Naive thymus-derived CD4-positive, alpha-beta T cell (primary cell): ENCODE measurements at regions of chr11 and their contacts with region 1.

Region 1: DNA sequence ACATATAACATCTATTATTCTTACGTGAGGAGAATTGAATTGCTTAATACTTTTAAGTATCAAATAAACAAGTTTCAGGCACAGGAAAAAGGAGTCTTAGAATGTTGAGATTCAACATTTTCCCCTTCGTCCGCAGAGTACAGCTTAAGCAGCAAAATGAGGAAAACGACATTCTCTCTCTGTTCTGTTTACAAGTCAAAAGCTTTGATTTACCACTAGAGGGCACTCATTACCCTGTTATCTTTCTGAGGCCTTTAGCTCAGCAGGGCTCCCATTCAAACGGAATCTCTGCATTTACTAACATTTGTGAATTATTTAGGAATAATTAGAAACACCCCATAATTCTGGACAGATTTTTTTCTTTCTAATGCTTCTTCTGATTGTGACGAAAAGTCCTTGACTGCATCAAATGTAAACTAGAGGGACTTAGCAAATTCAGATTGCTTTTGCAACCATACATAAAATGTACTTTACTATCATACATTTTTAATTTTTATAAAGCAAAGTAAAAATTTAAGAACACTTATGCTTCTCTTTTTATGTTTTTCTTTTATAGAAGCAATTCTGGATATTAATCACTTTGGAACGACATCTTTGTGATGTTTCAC is 75.0 kb downstream of the JRKL start:
- DNase-seq: peak in 7 of 9 donors; percentile 12 to 64 (median 54)
- ATAC-seq: peak; percentile 79
- H3K4me3 ChIP-seq: no peak overlapping the region
- H3K4me3 Mint-ChIP-seq: peak overlapping the region in 6 of 10 donors; percentile 64 to 76 (median 73)
- H3K27ac ChIP-seq: no peak overlapping the region
- H3K27ac Mint-ChIP-seq: peak overlapping the region in 1 of 9 donors; percentile 25
- H3K4me1 ChIP-seq: peaks cover 0 to 3% of the 10 kb centered on the region in 2 donors
- H3K4me1 Mint-ChIP-seq: peaks cover 0 to 8% (median 6%) of the 10 kb centered on the region in 7 donors
- H3K27me3 ChIP-seq: peaks cover 0 to 3% of the 10 kb centered on the region in 2 donors
- H3K27me3 Mint-ChIP-seq: peaks cover under 1 to 16% (median 13%) of the 10 kb centered on the region in 5 donors

Region 2: GRCh38 chr11:95835768-95836488 is 628.9 kb before region 1 on chr11:
- CTCF ChIA-PET with region 1: interaction called, 4 read pairs
- POLR2A ChIA-PET with region 1: no interaction called
- intact Hi-C with region 1: loop called in 1 of 2 experiments (anchors 1 kb)
- DNase-seq: peak; percentile 17 to 67 (median 49)
- ATAC-seq: peak; percentile 96
- H3K4me3 ChIP-seq: no peak overlapping the region
- H3K4me3 Mint-ChIP-seq: no peak overlapping the region
- H3K27ac ChIP-seq: no peak overlapping the region
- H3K27ac Mint-ChIP-seq: peak overlapping the region in 4 of 9 donors; percentile 17 to 65 (median 28)
- H3K4me1 ChIP-seq: no peaks in the 10 kb centered on the region
- H3K4me1 Mint-ChIP-seq: peaks cover 0 to 5% (median 0%) of the 10 kb centered on the region in 7 donors
- H3K27me3 ChIP-seq: no peaks in the 10 kb centered on the region
- H3K27me3 Mint-ChIP-seq: no peaks in the 10 kb centered on the region

Region 3: DNA sequence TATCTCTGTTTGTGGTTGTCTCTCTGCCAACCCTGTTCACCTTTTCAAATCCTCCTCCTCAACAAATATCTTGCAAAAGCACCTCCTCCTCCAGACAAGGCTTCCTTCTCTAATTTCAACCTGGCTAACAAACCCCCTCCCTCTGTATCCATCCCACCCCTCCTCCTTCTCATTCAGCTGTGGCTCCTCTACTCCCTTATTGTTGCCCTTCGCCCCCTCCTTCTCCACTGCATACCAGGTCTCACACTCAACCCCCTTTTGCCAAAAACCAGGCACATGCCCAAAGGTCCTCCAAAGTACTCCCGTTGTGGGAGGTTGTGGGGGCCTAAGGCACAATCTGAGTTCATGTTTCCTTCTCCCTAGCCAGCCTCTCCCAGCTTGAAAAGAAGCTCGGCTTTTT is 35.6 kb after region 1 on chr11:
- CTCF ChIA-PET with region 1: no interaction called
- POLR2A ChIA-PET with region 1: no interaction called
- intact Hi-C with region 1: no loop called
- DNase-seq: no peak
- ATAC-seq: no peak
- H3K4me3 ChIP-seq: no peak overlapping the region
- H3K4me3 Mint-ChIP-seq: no peak overlapping the region
- H3K27ac ChIP-seq: no peak overlapping the region
- H3K27ac Mint-ChIP-seq: no peak overlapping the region
- H3K4me1 ChIP-seq: no peaks in the 10 kb centered on the region
- H3K4me1 Mint-ChIP-seq: no peaks in the 10 kb centered on the region
- H3K27me3 ChIP-seq: no peaks in the 10 kb centered on the region
- H3K27me3 Mint-ChIP-seq: peaks cover 0 to 11% (median 6%) of the 10 kb centered on the region in 5 donors

Region 4: DNA sequence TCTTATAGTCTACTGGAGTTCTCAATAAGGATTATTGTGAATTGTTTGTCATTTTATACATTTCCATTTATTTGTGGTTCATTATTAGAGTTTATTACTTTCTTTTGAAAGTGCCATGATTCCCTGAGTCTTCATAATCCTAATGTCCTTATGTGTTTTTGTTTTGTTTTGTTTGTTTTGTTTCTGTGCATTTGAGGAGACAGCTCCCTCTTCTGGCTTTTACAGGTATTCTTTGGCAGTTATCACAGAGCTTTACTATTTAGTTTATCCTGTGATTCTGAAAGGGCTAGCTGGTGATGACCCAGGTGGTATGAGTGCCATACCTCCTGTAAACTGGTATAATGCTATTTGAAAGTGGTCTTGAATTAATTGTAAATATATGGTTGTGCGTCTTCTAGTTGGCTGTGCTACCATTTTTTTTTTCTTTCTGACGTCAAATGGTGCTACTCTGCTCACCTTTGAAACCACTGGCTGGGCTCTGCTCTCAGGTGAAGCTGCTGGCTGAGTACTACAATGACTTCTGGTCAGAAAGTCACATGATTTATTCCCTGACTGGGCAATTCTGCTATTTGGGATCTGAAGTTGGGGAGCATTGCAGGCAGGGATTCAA is 676.2 kb after region 1 on chr11:
- CTCF ChIA-PET with region 1: no interaction called
- POLR2A ChIA-PET with region 1: no interaction called
- intact Hi-C with region 1: loop called in 1 of 2 experiments (anchors 2 kb)
- DNase-seq: no peak
- ATAC-seq: no peak
- H3K4me3 ChIP-seq: no peak overlapping the region
- H3K4me3 Mint-ChIP-seq: no peak overlapping the region
- H3K27ac ChIP-seq: no peak overlapping the region
- H3K27ac Mint-ChIP-seq: no peak overlapping the region
- H3K4me1 ChIP-seq: no peaks in the 10 kb centered on the region
- H3K4me1 Mint-ChIP-seq: no peaks in the 10 kb centered on the region
- H3K27me3 ChIP-seq: no peaks in the 10 kb centered on the region
- H3K27me3 Mint-ChIP-seq: no peaks in the 10 kb centered on the region